ENCODE measurements at regions of chr10 and their contacts with region 1.

Region 1: GRCh38 chr10:110317866-110318850 is 13.4 kb upstream of the SMNDC1 start:
- DNase-seq: no peak
- ATAC-seq: no peak

Region 2: GRCh38 chr10:110170142-110170971 is 147.8 kb before region 1 on chr10:
- intact Hi-C with region 1: no loop called
- DNase-seq: peak; percentile 37
- ATAC-seq: peak in 1 of 2 donors; percentile 44

Region 3: DNA sequence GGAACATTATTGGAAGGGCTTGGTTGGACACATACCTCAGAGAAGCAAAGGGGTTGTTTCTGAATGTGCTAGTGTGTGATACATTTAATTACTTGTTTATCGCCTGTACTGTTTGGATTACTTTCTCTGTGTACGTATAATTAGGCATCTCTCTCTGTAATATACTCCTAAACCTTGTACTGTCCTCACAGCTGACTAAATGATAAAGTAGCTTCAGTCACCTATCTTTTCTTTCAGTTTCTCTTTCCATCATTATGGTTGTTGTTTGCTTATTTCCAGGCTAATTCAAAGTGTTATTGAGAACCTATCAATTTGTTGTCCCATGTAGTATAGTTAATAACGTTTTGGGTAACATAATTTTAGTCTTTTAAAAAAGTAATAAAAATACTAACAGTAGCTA is 76.8 kb before region 1 on chr10:
- intact Hi-C with region 1: no loop called
- DNase-seq: no peak
- ATAC-seq: no peak

Region 4: GRCh38 chr10:110354322-110354766 is 36.2 kb after region 1 on chr10:
- intact Hi-C with region 1: loop called in 1 of 2 experiments (anchors 5 kb)
- DNase-seq: peak; percentile 89
- ATAC-seq: peak; percentile 86 to 89

Region 5: GRCh38 chr10:110368002-110368401 is 49.8 kb after region 1 on chr10:
- intact Hi-C with region 1: no loop called
- DNase-seq: no peak
- ATAC-seq: peak in 1 of 2 donors; percentile 51

Measured in left cardiac atrium (tissue), 4 donors.